GM10248 (cell line): ENCODE measurements at regions of chr3 and their contacts with region 1.

Region 1: GRCh38 chr3:183766745-183767606 is 58.4 kb downstream of the MAP6D1 start:
- DNase-seq: peak; percentile 73
- CTCF ChIP-seq: peak; percentile 70

Region 2: GRCh38 chr3:183468424-183468823 is 298.6 kb before region 1 on chr3:
- CTCF ChIA-PET with region 1: interaction called, 32 read pairs
- POLR2A ChIA-PET with region 1: no interaction called
- DNase-seq: no peak
- CTCF ChIP-seq: no peak

Region 3: DNA sequence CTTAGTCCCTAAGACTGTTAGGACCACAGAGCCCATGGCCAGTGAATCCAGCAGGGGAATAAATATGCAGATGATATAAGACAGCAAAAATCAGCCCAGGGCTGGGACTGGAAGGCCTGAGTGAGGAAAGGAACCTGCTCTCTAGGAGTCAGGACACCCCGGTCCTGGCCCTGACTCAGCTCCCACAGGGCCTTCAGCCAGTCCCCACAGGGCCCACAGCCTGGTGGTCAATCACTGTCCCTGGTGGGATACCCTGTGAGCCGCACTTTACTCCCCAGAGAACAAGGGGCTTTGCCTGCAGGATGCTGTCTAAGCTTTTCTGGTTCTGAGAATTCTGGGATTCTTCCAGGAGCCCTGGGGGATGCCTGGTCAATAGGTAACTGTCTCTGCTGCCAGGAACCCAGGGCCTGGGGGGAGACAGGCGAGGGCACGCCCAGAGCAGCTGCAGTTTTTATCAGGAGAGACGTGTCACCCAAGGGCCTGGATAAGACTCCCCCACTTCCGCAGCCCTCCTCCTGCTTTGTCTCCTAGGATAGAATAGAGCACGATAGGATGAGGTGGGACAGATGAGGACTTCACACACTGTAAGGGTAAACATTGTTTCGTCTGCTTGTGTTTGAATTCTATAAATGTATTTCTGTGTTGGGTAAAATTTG is 289.0 kb before region 1 on chr3:
- CTCF ChIA-PET with region 1: interaction called, 32 read pairs
- POLR2A ChIA-PET with region 1: no interaction called
- DNase-seq: no peak
- CTCF ChIP-seq: no peak

Region 4: GRCh38 chr3:183553334-183554026 is 213.5 kb before region 1 on chr3:
- CTCF ChIA-PET with region 1: interaction called, 3 read pairs
- POLR2A ChIA-PET with region 1: interaction called, 12 read pairs
- DNase-seq: no peak
- CTCF ChIP-seq: no peak

Region 5: GRCh38 chr3:183597959-183598358 is 169.0 kb before region 1 on chr3:
- CTCF ChIA-PET with region 1: no interaction called
- POLR2A ChIA-PET with region 1: no interaction called
- DNase-seq: no peak
- CTCF ChIP-seq: no peak

Region 6: DNA sequence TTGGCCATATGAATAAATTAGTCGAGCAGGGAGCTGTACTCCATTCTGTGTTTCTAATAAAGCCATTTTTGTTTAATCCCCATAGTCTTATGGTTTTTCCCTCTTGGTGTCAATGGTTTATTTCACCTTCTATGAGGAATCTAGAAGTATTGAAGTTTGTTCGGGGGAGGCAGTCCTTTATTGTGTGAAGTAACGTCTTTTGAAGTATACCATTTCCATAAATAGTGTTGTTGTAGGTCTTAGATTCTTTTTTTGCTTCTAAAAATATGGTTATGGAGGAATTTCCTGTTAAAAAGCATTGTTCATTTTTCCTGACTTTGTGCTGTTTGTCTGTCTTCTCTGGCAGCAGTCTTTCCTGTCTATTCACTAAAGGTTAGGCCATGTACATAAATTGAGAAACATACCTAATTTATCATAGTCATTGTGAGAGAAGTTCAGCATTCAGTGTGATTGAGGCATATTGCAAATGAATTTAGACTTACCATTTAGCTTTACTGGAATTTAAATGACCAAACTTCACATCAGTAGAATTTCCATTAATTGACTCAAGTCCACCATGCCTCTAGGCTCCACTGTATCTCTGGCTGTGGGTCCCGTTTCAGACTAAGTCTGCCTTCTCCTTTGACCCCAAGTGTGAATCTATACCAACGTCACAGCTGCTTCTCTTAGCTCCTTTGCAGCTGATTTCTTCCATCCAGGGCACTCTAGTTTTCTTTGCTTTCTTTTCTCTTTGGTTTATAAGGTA is 32.1 kb before region 1 on chr3:
- CTCF ChIA-PET with region 1: no interaction called
- POLR2A ChIA-PET with region 1: no interaction called
- DNase-seq: no peak
- CTCF ChIP-seq: no peak

Region 7: GRCh38 chr3:183802989-183803388 is 36.0 kb after region 1 on chr3:
- CTCF ChIA-PET with region 1: no interaction called
- POLR2A ChIA-PET with region 1: no interaction called
- DNase-seq: no peak
- CTCF ChIP-seq: no peak